Endothelial cell of umbilical vein (primary cell): ENCODE measurements at regions of chr5 and their contacts with region 1.

Region 1: DNA sequence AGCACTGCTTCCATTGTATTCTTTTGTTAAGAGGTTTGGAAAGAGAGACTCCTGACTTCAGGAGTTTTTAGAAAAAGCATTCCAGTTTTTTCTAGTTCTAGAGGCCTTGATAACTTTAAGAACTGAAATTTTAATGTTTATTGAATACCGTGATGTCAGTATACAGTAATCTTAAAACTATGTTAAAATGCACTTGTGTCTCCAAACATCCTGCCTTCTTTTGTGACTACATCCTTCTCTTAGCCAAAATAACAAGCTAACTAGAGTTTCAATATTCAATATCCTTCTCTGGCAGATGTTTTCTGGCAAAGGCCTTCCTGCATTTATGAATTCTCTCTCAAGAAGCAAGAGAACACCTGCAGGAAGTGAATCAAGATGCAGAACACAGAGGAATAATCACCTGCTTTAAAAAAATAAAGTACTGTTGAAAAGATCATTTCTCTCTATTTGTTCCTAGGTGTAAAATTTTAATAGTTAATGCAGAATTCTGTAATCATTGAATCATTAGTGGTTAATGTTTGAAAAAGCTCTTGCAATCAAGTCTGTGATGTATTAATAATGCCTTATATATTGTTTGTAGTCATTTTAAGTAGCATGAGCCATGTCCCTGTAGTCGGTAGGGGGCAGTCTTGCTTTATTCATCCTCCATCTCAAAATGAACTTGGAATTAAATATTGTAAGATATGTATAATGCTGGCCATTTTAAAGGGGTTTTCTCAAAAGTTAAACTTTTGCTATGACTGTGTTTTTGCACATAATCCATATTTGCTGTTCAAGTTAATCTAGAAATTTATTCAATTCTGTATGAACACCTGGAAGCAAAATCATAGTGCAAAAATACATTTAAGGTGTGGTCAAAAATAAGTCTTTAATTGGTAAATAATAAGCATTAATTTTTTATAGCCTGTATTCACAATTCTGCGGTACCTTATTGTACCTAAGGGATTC is 43.1 kb downstream of the NDFIP1 start:
- DNase-seq: peak; percentile 83
- H3K4me3 ChIP-seq: no peak overlapping the region
- H3K27ac ChIP-seq: peak overlapping the region; percentile 2
- H3K4me1 ChIP-seq: peaks cover 19% of the 10 kb centered on the region
- H3K27me3 ChIP-seq: no peaks in the 10 kb centered on the region
- CTCF ChIP-seq: peak; percentile 63 to 66
- POLR2A ChIP-seq: no peak

Region 2: DNA sequence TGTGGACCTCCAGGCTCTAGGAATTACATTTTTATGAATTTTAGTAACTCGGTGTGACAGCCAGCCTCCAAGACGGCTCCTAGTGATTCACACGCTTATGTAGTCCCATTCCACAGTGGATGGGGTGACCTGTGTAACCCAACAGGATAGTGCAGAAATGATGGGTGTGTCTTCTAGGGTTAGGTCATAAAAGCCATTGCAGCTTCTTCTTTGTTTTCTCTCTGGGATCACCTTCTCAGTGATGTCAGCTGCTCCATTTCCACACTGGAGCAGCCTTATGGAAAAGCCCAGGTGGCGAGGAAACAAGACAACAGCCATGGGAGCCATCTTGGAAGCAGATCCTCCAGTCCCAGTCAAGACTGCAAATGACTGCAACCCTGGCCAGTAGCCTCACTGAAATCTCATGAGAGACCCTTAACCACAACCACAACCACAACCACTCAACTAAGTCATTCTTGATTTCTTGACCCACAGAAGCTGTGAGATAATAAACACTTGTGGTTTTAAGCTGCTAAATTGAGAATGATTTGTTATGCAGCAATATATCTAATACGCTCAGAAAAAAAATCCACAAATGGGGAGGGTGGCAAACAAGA is 133.8 kb before region 1 on chr5:
- CTCF ChIA-PET with region 1: no interaction called
- POLR2A ChIA-PET with region 1: no interaction called
- dilution Hi-C with region 1: no loop called
- intact Hi-C with region 1: no loop called
- DNase-seq: no peak
- H3K4me3 ChIP-seq: no peak overlapping the region
- H3K27ac ChIP-seq: no peak overlapping the region
- H3K4me1 ChIP-seq: peaks cover 35% of the 10 kb centered on the region
- H3K27me3 ChIP-seq: no peaks in the 10 kb centered on the region
- CTCF ChIP-seq: no peak
- POLR2A ChIP-seq: no peak

Region 3: DNA sequence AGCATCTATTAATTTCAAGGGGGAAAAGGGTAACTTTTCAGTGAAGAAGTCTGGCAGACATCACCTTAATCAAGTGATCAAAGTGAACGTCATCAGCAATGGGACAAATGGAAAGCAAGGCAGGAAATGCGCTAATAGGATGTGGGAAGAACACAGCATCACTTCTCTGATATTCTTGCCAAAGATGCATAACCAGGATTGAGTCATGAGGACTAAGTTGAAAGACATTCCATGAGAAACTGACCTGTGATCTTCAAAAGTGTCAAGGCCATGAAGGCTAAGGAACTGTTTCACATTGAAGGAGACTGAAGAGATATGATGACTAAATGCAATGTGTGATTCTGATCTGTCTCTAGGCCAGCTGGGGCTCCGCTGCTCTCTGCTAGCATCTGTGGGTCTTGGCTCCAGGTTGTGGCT is 49.8 kb after region 1 on chr5:
- CTCF ChIA-PET with region 1: interaction called, 3 read pairs
- POLR2A ChIA-PET with region 1: no interaction called
- dilution Hi-C with region 1: no loop called
- intact Hi-C with region 1: loop called (anchors 1 kb)
- DNase-seq: peak; percentile 85
- H3K4me3 ChIP-seq: no peak overlapping the region
- H3K27ac ChIP-seq: peak overlapping the region; percentile 91
- H3K4me1 ChIP-seq: peaks cover 40% of the 10 kb centered on the region
- H3K27me3 ChIP-seq: no peaks in the 10 kb centered on the region
- CTCF ChIP-seq: no peak
- POLR2A ChIP-seq: peak; percentile 58

Region 4: GRCh38 chr5:142296914-142297417 is 145.3 kb after region 1 on chr5:
- CTCF ChIA-PET with region 1: no interaction called
- POLR2A ChIA-PET with region 1: no interaction called
- dilution Hi-C with region 1: no loop called
- intact Hi-C with region 1: loop called (anchors 1 kb)
- DNase-seq: peak; percentile 98
- H3K4me3 ChIP-seq: no peak overlapping the region
- H3K27ac ChIP-seq: peak overlapping the region; percentile 99
- H3K4me1 ChIP-seq: peaks cover 41% of the 10 kb centered on the region
- H3K27me3 ChIP-seq: no peaks in the 10 kb centered on the region
- CTCF ChIP-seq: no peak
- POLR2A ChIP-seq: no peak

Region 5: DNA sequence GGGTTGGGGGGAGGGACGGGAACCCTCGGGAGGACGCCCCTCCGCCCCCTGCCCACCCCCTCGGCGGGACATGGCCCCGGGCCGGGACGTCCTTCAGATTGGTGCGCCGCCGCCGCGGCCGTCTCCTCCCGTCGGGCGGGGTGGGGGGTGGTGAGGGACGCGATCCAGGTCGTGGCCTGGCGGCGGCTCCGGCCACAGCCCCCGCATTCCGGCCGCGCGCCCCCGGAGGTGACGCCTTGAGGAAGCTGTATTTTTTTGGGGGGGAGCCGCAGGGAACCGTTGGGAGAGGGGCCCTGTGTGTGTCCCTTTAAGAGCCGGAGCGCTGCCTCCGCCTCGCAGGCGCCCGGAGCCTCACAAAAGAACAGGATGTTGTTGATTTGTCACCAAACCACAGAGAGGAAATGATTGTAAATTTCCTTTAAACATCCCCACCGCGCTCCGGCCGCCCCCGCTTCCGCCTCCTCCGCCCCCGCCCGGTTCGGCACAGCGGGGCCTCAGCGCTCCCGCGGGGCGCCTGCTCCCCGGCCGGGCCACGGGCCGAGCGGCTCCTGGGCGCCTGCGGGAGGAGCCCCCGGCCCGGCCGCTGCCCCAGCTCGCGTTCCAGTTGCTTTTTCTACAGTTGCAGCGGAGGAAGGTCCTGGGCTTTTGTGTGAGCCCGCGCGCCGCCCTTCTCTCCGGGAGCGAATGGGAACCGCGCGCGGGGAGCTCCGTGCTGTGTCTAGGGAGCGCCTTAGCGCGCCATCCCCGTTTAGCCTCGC is 205.2 kb after region 1 on chr5:
- CTCF ChIA-PET with region 1: interaction called, 8 read pairs
- POLR2A ChIA-PET with region 1: no interaction called
- dilution Hi-C with region 1: no loop called
- intact Hi-C with region 1: loop called (anchors 1 kb)
- DNase-seq: peak; percentile 94
- H3K4me3 ChIP-seq: peak overlapping the region in 1 of 3 experiments; percentile 54
- H3K27ac ChIP-seq: peak overlapping the region; percentile 74
- H3K4me1 ChIP-seq: peaks cover 31% of the 10 kb centered on the region
- H3K27me3 ChIP-seq: no peaks in the 10 kb centered on the region
- CTCF ChIP-seq: no peak
- POLR2A ChIP-seq: peak; percentile 47

Region 6: DNA sequence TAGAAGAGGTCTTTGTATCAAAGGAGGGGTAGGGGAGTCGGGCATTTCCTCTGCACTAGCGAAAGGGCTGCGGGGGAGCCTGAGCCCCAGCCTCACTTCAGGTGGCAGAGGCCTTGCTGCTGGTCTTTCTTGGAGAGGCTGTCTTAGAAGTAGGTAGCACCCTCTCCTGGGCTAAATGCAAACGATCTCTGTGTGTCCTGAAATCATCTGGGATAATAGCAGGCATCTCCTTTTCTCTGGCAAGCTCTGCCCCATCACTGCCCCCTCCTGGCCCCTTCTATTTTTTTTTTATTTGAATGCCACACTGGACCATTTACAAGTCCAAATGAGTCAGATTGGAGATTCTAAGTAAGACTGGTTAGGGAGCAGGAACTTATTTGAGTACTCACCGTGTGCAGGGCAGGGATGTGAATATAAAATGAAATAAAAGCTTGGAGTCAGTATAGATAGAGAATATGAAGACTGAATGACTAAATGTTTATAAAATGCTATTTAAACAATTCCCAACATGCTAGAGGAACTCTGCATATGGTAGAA is 397.1 kb after region 1 on chr5:
- CTCF ChIA-PET with region 1: interaction called, 68 read pairs
- POLR2A ChIA-PET with region 1: interaction called, 3 read pairs
- dilution Hi-C with region 1: loop called (anchors 5 kb)
- intact Hi-C with region 1: loop called (anchors 1 kb)
- DNase-seq: peak; percentile 97
- H3K4me3 ChIP-seq: no peak overlapping the region
- H3K27ac ChIP-seq: peak overlapping the region; percentile 43
- H3K4me1 ChIP-seq: peaks cover 34% of the 10 kb centered on the region
- H3K27me3 ChIP-seq: no peaks in the 10 kb centered on the region
- CTCF ChIP-seq: peak; percentile 87 to 93
- POLR2A ChIP-seq: no peak

Region 7: GRCh38 chr5:142699184-142699720 is 547.5 kb after region 1 on chr5:
- CTCF ChIA-PET with region 1: interaction called, 21 read pairs
- POLR2A ChIA-PET with region 1: no interaction called
- dilution Hi-C with region 1: no loop called
- intact Hi-C with region 1: loop called (anchors 1 kb)
- DNase-seq: peak; percentile 83
- H3K4me3 ChIP-seq: no peak overlapping the region
- H3K27ac ChIP-seq: no peak overlapping the region
- H3K4me1 ChIP-seq: no peaks in the 10 kb centered on the region
- H3K27me3 ChIP-seq: peaks cover 0 to 6% of the 10 kb centered on the region in 2 experiments
- CTCF ChIP-seq: peak; percentile 91 to 93
- POLR2A ChIP-seq: no peak